ENCODE measurements at regions of chr6 and their contacts with region 1.

Region 1: GRCh38 chr6:144778773-144779492 is 493.8 kb downstream of the UTRN start:
- DNase-seq: no peak
- H3K4me3 ChIP-seq: no peak overlapping the region
- H3K27ac ChIP-seq: no peak overlapping the region
- H3K4me1 ChIP-seq: no peaks in the 10 kb centered on the region
- H3K27me3 ChIP-seq: no peaks in the 10 kb centered on the region
- CTCF ChIP-seq: no peak
- POLR2A ChIP-seq: no peak

Region 2: DNA sequence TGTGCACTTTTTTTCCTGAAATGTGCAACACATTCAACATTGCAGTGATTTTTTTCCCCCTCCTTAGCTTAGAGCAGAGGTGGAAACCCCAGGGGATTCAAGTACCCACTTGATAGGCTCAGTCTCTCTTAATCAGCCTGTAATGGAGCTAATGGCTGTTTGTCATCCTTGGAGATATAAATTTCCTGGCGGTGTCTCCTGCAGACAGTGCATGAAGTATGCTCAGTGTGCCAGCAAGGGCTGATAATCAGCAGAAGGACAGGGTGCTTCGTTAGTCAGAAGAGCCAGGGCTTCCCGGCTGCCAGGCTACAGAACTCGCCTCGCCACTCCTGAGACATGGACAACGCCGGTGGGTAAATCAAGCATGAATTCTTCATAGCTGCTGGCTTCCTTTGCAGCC is 1171.0 kb before region 1 on chr6:
- intact Hi-C with region 1: no loop called
- DNase-seq: no peak
- H3K4me3 ChIP-seq: no peak overlapping the region
- H3K27ac ChIP-seq: no peak overlapping the region
- H3K4me1 ChIP-seq: no peaks in the 10 kb centered on the region
- H3K27me3 ChIP-seq: no peaks in the 10 kb centered on the region
- CTCF ChIP-seq: no peak
- POLR2A ChIP-seq: no peak

Region 3: DNA sequence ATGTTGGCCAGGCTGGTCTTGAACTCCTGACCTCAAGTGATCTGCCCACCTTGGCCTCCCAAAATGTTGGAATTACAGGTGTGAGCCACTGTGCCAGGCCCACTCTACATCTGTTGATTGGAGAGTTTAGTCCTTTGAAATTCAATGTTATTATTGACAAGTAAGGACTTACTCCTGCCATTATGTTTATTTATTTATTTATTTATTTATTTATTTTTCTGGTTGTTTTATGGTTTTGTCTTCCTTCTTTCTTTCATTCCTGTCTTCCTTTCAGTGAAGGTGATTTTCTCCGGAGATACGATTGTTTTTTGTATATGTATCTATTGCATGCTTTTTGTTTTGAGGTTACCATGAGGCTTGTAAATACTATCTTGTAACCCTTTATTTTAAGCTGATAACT is 353.8 kb after region 1 on chr6:
- intact Hi-C with region 1: loop called (anchors 5 kb)
- DNase-seq: no peak
- H3K4me3 ChIP-seq: no peak overlapping the region
- H3K27ac ChIP-seq: no peak overlapping the region
- H3K4me1 ChIP-seq: no peaks in the 10 kb centered on the region
- H3K27me3 ChIP-seq: no peaks in the 10 kb centered on the region
- CTCF ChIP-seq: no peak
- POLR2A ChIP-seq: no peak